Breast epithelium (tissue), 4 donors: ENCODE measurements at regions of chr5 and their contacts with region 1.

Region 1: DNA sequence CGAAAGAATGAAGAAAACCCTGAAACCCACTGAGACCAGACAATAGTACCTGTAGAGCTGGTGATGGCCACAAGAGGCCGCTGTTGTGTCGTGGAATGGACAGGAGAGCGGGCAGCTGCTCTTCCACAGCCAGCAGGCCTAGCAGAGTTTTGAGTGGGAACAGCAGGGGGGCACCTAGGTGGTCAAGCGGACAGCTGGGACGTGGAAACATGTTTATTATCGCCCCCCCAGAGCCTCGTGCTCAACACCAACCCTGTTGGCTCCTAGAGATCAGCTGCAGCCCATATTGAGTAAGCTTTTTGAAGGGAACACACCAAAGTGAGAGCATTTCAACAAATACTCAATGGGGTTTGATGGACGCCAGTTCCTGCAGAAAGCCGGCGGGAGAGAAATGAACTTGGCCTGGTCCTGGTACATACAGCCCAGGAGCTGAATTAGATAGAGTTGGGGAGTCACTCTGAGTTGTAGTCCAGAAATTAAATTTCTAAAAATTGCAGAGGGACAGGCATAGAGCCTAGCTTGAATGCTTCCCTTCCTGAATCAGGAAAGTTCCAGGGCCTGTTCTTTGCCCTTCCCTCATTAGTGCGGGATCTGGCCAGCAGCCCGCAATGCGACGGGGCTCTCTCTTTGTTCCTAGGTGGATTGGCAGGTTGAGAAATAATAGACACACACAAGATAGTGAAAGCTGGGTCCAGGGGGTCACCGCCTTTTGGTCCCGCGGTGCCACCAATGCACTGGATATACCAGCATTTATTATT is 33.8 kb downstream of the MFAP3 start:
- DNase-seq: peak; percentile 54 to 78
- H3K4me3 ChIP-seq: no peak overlapping the region
- H3K27ac ChIP-seq: no peak overlapping the region
- H3K4me1 ChIP-seq: peaks cover 0 to 2% of the 10 kb centered on the region in 2 donors
- H3K27me3 ChIP-seq: no peaks in the 10 kb centered on the region
- CTCF ChIP-seq: peak; percentile 78 to 95 (median 92)
- POLR2A ChIP-seq: no peak

Region 2: GRCh38 chr5:154412925-154413324 is 340.3 kb after region 1 on chr5:
- intact Hi-C with region 1: loop called (anchors 1 kb)
- DNase-seq: no peak
- H3K4me3 ChIP-seq: no peak overlapping the region
- H3K27ac ChIP-seq: no peak overlapping the region
- H3K4me1 ChIP-seq: no peaks in the 10 kb centered on the region
- H3K27me3 ChIP-seq: no peaks in the 10 kb centered on the region
- CTCF ChIP-seq: no peak
- POLR2A ChIP-seq: no peak

Region 3: GRCh38 chr5:155867522-155868088 is 1795.0 kb after region 1 on chr5:
- intact Hi-C with region 1: loop called (anchors 10 kb)
- DNase-seq: no peak
- H3K4me3 ChIP-seq: no peak overlapping the region
- H3K27ac ChIP-seq: no peak overlapping the region
- H3K4me1 ChIP-seq: no peaks in the 10 kb centered on the region
- H3K27me3 ChIP-seq: no peaks in the 10 kb centered on the region
- CTCF ChIP-seq: no peak
- POLR2A ChIP-seq: no peak